ENCODE measurements at regions of chr1 and their contacts with region 1.

Region 1: GRCh38 chr1:28248283-28249012 is 10.9 kb upstream of the SESN2 start:
- DNase-seq: peak; percentile 85
- H3K4me3 ChIP-seq: peak overlapping the region in 1 of 3 experiments; percentile 10
- H3K27ac ChIP-seq: peak overlapping the region; percentile 22
- H3K4me1 ChIP-seq: peaks cover 25% of the 10 kb centered on the region
- H3K27me3 ChIP-seq: no peaks in the 10 kb centered on the region
- CTCF ChIP-seq: peak; percentile 91 to 96
- POLR2A ChIP-seq: no peak

Region 2: DNA sequence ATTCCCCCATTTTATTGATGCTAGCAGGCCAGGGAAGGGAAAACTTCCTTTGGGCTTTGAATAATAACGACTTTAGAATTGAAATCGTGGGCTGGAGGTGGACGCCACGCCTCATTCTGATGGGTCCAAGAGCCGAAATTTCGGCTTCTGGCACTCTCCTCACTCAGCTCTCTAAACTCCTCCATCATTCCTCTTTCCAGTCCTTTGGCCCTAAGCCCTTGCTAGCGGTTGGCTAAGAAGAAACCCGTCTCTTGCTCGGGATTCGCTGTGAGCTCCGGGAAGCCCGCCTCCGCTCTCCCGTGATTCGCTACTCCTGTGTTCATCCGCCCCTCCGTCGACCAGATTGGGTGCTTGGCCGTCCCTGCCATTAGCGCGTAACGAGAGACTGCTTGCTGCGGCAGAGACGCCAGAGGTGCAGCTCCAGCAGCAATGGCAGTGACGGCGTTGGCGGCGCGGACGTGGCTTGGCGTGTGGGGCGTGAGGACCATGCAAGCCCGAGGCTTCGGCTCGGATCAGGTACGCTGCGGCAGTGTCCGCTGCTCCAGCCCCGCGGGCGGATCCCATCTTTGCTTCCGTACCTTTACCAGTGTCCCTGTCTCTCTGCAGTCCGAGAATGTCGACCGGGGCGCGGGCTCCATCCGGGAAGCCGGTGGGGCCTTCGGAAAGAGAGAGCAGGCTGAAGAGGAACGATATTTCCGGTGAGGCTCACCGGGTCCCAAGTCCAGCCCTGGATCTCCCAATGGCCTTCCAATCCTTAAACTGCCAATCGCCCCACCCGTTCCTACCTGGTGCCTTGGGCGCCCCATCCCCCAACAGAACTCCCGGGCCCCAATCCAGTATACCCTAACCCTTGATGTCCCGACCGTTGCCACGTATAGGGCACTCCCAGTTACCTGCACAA is 12.4 kb before region 1 on chr1 and contains the start of gene ATP5IF1:
- CTCF ChIA-PET with region 1: interaction called, 32 read pairs
- POLR2A ChIA-PET with region 1: interaction called, 4 read pairs
- dilution Hi-C with region 1: no loop called
- intact Hi-C with region 1: no loop called
- DNase-seq: peak; percentile 99
- H3K4me3 ChIP-seq: peak within 1 kb of the TSS; percentile 49 to 84 (median 64)
- H3K27ac ChIP-seq: peak within 1 kb of the TSS; percentile 1
- H3K4me1 ChIP-seq: peaks cover 17% of the 10 kb centered on the region
- H3K27me3 ChIP-seq: no peaks in the 10 kb centered on the region
- CTCF ChIP-seq: no peak
- POLR2A ChIP-seq: peak; percentile 97
- total RNA-seq, gene ATP5IF1: 133 and 144 TPM in 2 replicates

Region 3: GRCh38 chr1:28273216-28273860 is 24.9 kb after region 1 on chr1:
- CTCF ChIA-PET with region 1: interaction called, 17 read pairs
- POLR2A ChIA-PET with region 1: interaction called, 5 read pairs
- dilution Hi-C with region 1: no loop called
- intact Hi-C with region 1: no loop called
- DNase-seq: no peak
- H3K4me3 ChIP-seq: no peak overlapping the region
- H3K27ac ChIP-seq: no peak overlapping the region
- H3K4me1 ChIP-seq: peaks cover 3% of the 10 kb centered on the region
- H3K27me3 ChIP-seq: no peaks in the 10 kb centered on the region
- CTCF ChIP-seq: no peak
- POLR2A ChIP-seq: no peak

Region 4: GRCh38 chr1:28329395-28330153 is 81.1 kb after region 1 on chr1:
- CTCF ChIA-PET with region 1: interaction called, 31 read pairs
- POLR2A ChIA-PET with region 1: interaction called, 3 read pairs
- dilution Hi-C with region 1: no loop called
- intact Hi-C with region 1: loop called (anchors 2 kb)
- DNase-seq: peak; percentile 25
- H3K4me3 ChIP-seq: peak overlapping the region; percentile 62 to 93 (median 78)
- H3K27ac ChIP-seq: peak overlapping the region; percentile 91
- H3K4me1 ChIP-seq: peaks cover 11% of the 10 kb centered on the region
- H3K27me3 ChIP-seq: no peaks in the 10 kb centered on the region
- CTCF ChIP-seq: no peak
- POLR2A ChIP-seq: no peak

Region 5: GRCh38 chr1:28369371-28370238 is 121.2 kb after region 1 on chr1 and contains the start of gene PHACTR4:
- CTCF ChIA-PET with region 1: interaction called, 33 read pairs
- POLR2A ChIA-PET with region 1: no interaction called
- dilution Hi-C with region 1: no loop called
- intact Hi-C with region 1: loop called (anchors 1 kb)
- DNase-seq: peak; percentile 90
- H3K4me3 ChIP-seq: peak within 1 kb of the TSS; percentile 67 to 90 (median 83)
- H3K27ac ChIP-seq: peak within 1 kb of the TSS; percentile 67
- H3K4me1 ChIP-seq: peaks cover 9% of the 10 kb centered on the region
- H3K27me3 ChIP-seq: no peaks in the 10 kb centered on the region
- CTCF ChIP-seq: no peak
- POLR2A ChIP-seq: peak; percentile 96
- total RNA-seq, gene PHACTR4: 59.7 and 61.0 TPM in 2 replicates

Region 6: GRCh38 chr1:28581536-28582247 is 333.2 kb after region 1 on chr1:
- CTCF ChIA-PET with region 1: interaction called, 15 read pairs
- POLR2A ChIA-PET with region 1: interaction called, 10 read pairs
- dilution Hi-C with region 1: no loop called
- intact Hi-C with region 1: no loop called
- DNase-seq: peak; percentile 97
- H3K4me3 ChIP-seq: peak overlapping the region; percentile 75 to 98 (median 92)
- H3K27ac ChIP-seq: peak overlapping the region; percentile 65
- H3K4me1 ChIP-seq: peaks cover 31% of the 10 kb centered on the region
- H3K27me3 ChIP-seq: no peaks in the 10 kb centered on the region
- CTCF ChIP-seq: no peak
- POLR2A ChIP-seq: peak; percentile 100

Measured in endothelial cell of umbilical vein (primary cell).